Transverse colon (tissue), 4 donors: ENCODE measurements at regions of chr19 and their contacts with region 1.

Region 1: GRCh38 chr19:47805313-47805712 is 962 bp upstream of the TPRX1 start:
- DNase-seq: no peak
- H3K4me3 ChIP-seq: no peak overlapping the region
- H3K27ac ChIP-seq: no peak overlapping the region
- H3K4me1 ChIP-seq: no peaks in the 10 kb centered on the region
- H3K27me3 ChIP-seq: no peaks in the 10 kb centered on the region
- CTCF ChIP-seq: no peak
- EP300 ChIP-seq: no peak
- POLR2A ChIP-seq: no peak

Region 2: GRCh38 chr19:46137915-46138473 is 1667.3 kb before region 1 on chr19:
- in situ Hi-C with region 1: no loop called
- intact Hi-C with region 1: loop called (anchors 5 kb)
- DNase-seq: no peak
- H3K4me3 ChIP-seq: no peak overlapping the region
- H3K27ac ChIP-seq: no peak overlapping the region
- H3K4me1 ChIP-seq: peaks cover 0 to 13% (median 9%) of the 10 kb centered on the region in 4 donors
- H3K27me3 ChIP-seq: no peaks in the 10 kb centered on the region
- CTCF ChIP-seq: no peak
- EP300 ChIP-seq: no peak
- POLR2A ChIP-seq: no peak